OCI-LY7 (cell line): ENCODE measurements at regions of chr10 and their contacts with region 1.

Region 1: DNA sequence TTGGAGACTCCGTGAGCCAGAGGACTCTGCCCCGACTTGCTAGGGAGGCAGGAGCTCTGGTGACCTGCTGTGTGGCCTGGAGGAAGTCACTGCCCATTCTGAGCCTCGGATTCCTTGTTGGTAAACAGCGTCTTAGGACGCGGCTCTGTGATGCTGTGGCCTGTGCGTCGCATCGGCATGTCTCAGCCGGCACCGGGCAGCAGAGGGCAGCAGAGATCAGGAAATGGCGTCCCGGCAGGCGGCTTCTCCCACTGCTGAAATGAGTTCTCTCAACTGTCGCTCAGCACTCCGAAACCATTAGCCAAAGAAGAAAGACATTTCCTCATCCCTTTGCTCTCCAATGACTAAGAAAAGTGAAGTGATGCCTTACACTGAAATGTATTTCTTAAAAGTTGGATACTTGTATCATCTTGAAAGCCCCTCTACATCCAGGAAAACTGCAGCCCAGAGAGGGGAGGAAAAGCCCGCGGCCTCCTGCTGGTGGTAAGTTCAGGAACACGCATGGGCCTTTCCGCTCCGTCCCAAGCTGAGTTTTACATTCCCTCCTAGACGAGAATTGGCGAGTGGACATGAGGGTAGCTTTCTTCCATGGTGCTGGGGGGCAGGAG is 91.7 kb downstream of the WDR11 start:
- DNase-seq: peak; percentile 68
- H3K4me3 ChIP-seq: no peak overlapping the region
- H3K27ac ChIP-seq: no peak overlapping the region
- H3K4me1 ChIP-seq: peaks cover 7% of the 10 kb centered on the region
- CTCF ChIP-seq: peak; percentile 83

Region 2: DNA sequence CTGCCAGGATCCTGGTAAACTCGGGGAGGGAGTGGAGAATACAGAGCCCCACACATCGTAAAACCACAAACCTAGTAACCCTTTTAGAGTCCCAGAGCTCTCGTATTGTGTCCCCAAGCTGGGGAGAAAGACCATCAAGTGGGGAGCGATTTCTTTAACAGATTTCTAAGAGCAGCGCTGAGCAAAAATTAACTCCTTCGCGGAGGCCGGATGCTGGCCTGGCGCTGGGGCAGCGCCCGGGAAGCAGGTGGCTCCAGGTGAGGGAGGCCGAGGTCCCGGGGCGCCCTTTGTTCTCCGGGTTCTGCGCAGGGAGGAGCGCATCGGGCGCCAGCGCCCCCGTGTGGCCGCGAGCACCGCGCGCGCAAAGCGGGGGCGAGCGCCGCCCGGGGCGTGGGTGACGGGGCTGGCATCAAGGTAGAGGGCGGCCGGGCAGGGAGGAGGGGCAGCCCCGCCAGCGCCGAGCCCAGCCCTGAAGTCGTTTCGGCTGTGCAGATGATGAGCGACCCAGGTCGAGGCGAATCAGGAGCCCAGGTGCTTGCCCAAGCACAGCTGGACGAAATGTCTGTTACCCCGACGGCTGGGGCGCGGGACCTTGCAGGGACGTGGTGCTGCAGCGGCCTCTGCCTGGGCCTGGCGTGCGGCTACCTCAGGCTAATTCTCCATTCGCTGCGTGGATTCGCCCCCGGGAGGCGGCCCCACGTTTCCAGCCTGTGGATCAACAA is 665.7 kb after region 1 on chr10:
- CTCF ChIA-PET with region 1: no interaction called
- POLR2A ChIA-PET with region 1: interaction called, 3 read pairs
- intact Hi-C with region 1: loop called (anchors 5 kb)
- DNase-seq: peak; percentile 26
- H3K4me3 ChIP-seq: no peak overlapping the region
- H3K27ac ChIP-seq: no peak overlapping the region
- H3K4me1 ChIP-seq: no peaks in the 10 kb centered on the region
- CTCF ChIP-seq: peak; percentile 82

Region 3: GRCh38 chr10:121734589-121735045 is 791.7 kb after region 1 on chr10:
- CTCF ChIA-PET with region 1: no interaction called
- POLR2A ChIA-PET with region 1: no interaction called
- intact Hi-C with region 1: loop called (anchors 1 kb)
- DNase-seq: peak; percentile 36
- H3K4me3 ChIP-seq: no peak overlapping the region
- H3K27ac ChIP-seq: no peak overlapping the region
- H3K4me1 ChIP-seq: no peaks in the 10 kb centered on the region
- CTCF ChIP-seq: peak; percentile 83

Region 4: GRCh38 chr10:121886997-121887622 is 944.2 kb after region 1 on chr10:
- CTCF ChIA-PET with region 1: no interaction called
- POLR2A ChIA-PET with region 1: no interaction called
- intact Hi-C with region 1: loop called (anchors 5 kb)
- DNase-seq: peak; percentile 67
- H3K4me3 ChIP-seq: no peak overlapping the region
- H3K27ac ChIP-seq: no peak overlapping the region
- H3K4me1 ChIP-seq: no peaks in the 10 kb centered on the region
- CTCF ChIP-seq: peak; percentile 92